ENCODE measurements at regions of chr5 and their contacts with region 1.

Region 1: DNA sequence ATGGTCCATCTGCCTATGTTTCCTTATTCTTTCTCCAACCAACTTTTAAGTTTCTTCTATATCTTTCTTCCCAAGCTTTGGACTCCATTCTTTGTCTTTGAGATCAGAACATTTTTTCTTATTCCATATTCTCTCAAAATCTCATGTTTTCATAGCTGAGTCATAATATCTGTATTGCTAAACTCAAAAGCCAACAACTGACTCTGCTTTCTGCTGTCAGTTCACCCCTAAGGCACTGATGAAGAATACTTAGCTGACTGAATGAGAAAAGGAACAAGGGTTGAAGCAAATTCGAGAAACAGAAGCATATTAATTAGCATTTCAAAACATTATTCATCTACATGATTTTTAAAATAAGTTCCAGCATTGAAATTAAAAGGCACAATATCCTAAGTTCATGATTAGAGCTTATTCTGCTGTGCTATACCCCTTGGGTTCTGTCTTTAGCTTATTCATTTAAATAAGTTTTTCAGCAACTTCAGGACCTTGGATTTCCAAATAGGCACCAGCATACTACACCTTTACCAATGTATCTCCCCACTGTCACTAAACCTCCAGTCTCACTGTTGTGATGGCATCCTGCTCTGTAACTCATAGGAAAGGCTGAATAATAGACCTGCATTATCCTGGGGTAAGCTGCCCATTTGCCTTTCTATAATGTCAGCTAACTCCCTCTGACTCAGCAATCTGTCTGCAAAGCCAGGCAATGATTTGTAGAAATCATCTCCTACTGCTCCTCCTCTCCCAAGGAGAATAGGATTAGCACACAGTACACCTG is 49.9 kb upstream of the C5orf46 start:
- DNase-seq: no peak
- H3K4me3 ChIP-seq: no peak overlapping the region
- H3K27ac ChIP-seq: no peak overlapping the region
- H3K4me1 ChIP-seq: no peaks in the 10 kb centered on the region
- H3K27me3 ChIP-seq: no peaks in the 10 kb centered on the region
- CTCF ChIP-seq: no peak
- POLR2A ChIP-seq: no peak

Region 2: GRCh38 chr5:148084269-148084668 is 128.0 kb after region 1 on chr5:
- CTCF ChIA-PET with region 1: no interaction called
- POLR2A ChIA-PET with region 1: no interaction called
- dilution Hi-C with region 1: no loop called
- intact Hi-C with region 1: no loop called
- DNase-seq: no peak
- H3K4me3 ChIP-seq: no peak overlapping the region
- H3K27ac ChIP-seq: no peak overlapping the region
- H3K4me1 ChIP-seq: no peaks in the 10 kb centered on the region
- H3K27me3 ChIP-seq: no peaks in the 10 kb centered on the region
- CTCF ChIP-seq: no peak
- POLR2A ChIP-seq: no peak

Region 3: DNA sequence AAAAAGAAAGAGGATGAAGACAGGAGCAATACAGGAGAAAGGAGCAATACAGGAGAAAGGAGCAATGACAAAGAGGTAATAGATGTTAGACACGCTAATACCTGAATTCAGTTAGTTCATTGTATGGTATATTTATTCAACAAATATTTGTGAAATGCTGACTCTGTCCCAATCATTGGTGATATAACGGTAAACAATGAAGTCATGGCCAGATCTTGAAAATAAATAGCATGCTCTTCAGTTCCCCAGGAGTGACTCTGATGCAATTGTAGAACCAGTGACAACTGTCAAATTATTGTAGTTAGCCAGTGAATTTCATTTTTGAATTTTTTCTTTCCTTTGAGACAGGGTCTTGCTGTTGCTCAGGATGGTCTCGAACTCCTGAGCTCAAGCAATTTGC is 164.1 kb after region 1 on chr5:
- CTCF ChIA-PET with region 1: interaction called, 12 read pairs
- POLR2A ChIA-PET with region 1: no interaction called
- dilution Hi-C with region 1: no loop called
- intact Hi-C with region 1: no loop called
- DNase-seq: no peak
- H3K4me3 ChIP-seq: no peak overlapping the region
- H3K27ac ChIP-seq: no peak overlapping the region
- H3K4me1 ChIP-seq: no peaks in the 10 kb centered on the region
- H3K27me3 ChIP-seq: no peaks in the 10 kb centered on the region
- CTCF ChIP-seq: no peak
- POLR2A ChIP-seq: no peak